ENCODE measurements at regions of chr18 and their contacts with region 1.

Region 1: GRCh38 chr18:63367053-63367953 is at the start of gene KDSR:
- DNase-seq: peak; percentile 71 to 90 (median 79)
- ATAC-seq: peak; percentile 92
- H3K4me3 ChIP-seq: peak within 1 kb of the TSS; percentile 92
- H3K4me3 Mint-ChIP-seq: peak within 1 kb of the TSS; percentile 85 to 99 (median 94)
- H3K27ac ChIP-seq: peak within 1 kb of the TSS; percentile 77
- H3K27ac Mint-ChIP-seq: peak within 1 kb of the TSS; percentile 84 to 92 (median 89)
- H3K4me1 ChIP-seq: peaks cover 6 to 29% of the 10 kb centered on the region in 2 donors
- H3K4me1 Mint-ChIP-seq: peaks cover 32 to 56% (median 41%) of the 10 kb centered on the region in 7 donors
- H3K27me3 ChIP-seq: no peaks in the 10 kb centered on the region
- H3K27me3 Mint-ChIP-seq: no peaks in the 10 kb centered on the region
- total RNA-seq, gene KDSR: 24.4 to 57.9 (median 46.9) TPM

Region 2: GRCh38 chr18:63378919-63379638 is 11.8 kb after region 1 on chr18:
- CTCF ChIA-PET with region 1: no interaction called
- POLR2A ChIA-PET with region 1: no interaction called
- intact Hi-C with region 1: loop called in 1 of 2 experiments (anchors 1 kb)
- DNase-seq: no peak
- ATAC-seq: no peak
- H3K4me3 ChIP-seq: no peak overlapping the region
- H3K4me3 Mint-ChIP-seq: peak overlapping the region in 9 of 10 donors; percentile 2 to 65 (median 19)
- H3K27ac ChIP-seq: no peak overlapping the region
- H3K27ac Mint-ChIP-seq: peak overlapping the region; percentile 5 to 85 (median 61)
- H3K4me1 ChIP-seq: peaks cover 0 to 7% of the 10 kb centered on the region in 2 donors
- H3K4me1 Mint-ChIP-seq: peaks cover 14 to 29% (median 19%) of the 10 kb centered on the region in 7 donors
- H3K27me3 ChIP-seq: no peaks in the 10 kb centered on the region
- H3K27me3 Mint-ChIP-seq: no peaks in the 10 kb centered on the region

Region 3: DNA sequence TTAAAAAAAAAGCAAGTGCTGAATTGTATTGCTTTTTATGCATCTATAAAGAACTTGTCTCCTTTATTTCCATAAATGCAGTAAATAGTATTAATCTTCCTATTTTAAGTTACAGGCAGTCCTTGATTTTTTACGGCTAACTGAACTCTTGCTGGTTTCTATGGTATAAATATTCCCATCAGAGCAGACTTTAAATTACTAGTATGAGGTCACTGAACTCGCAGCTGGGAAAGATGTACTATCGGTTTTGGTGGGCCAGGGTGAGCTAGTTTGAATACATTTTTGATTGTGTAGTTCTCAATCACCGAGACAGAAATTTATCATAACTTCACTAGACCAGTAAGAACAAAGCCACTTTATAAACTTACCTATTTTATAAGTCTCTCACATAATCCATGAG is 20.6 kb after region 1 on chr18:
- CTCF ChIA-PET with region 1: no interaction called
- POLR2A ChIA-PET with region 1: no interaction called
- intact Hi-C with region 1: loop called in 1 of 2 experiments (anchors 2 kb)
- DNase-seq: no peak
- ATAC-seq: no peak
- H3K4me3 ChIP-seq: no peak overlapping the region
- H3K4me3 Mint-ChIP-seq: no peak overlapping the region
- H3K27ac ChIP-seq: no peak overlapping the region
- H3K27ac Mint-ChIP-seq: peak overlapping the region in 1 of 9 donors; percentile 49
- H3K4me1 ChIP-seq: no peaks in the 10 kb centered on the region
- H3K4me1 Mint-ChIP-seq: peaks cover 0 to 2% (median 0%) of the 10 kb centered on the region in 7 donors
- H3K27me3 ChIP-seq: no peaks in the 10 kb centered on the region
- H3K27me3 Mint-ChIP-seq: no peaks in the 10 kb centered on the region

Region 4: DNA sequence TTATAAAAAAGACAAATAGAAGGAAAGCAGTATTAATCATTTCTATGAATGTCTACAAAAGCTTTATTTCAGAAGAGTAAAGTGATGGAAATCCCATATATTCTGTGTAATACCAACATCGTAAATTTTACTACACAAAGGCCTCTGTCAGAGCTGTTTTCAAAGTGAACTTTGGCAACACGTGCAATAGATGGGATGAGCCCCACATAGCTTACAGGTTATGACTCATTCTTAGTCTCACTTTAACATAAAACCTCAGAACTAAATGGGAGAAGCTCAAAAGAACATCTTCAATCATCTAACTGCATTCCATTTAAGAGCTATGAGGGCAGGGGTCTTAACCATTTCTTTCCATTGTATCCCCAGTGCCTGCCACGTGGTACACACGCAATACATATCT is 43.5 kb after region 1 on chr18:
- CTCF ChIA-PET with region 1: no interaction called
- POLR2A ChIA-PET with region 1: no interaction called
- intact Hi-C with region 1: loop called in 1 of 2 experiments (anchors 5 kb)
- DNase-seq: no peak
- ATAC-seq: no peak
- H3K4me3 ChIP-seq: no peak overlapping the region
- H3K4me3 Mint-ChIP-seq: peak overlapping the region in 1 of 10 donors; percentile 30
- H3K27ac ChIP-seq: no peak overlapping the region
- H3K27ac Mint-ChIP-seq: peak overlapping the region in 4 of 9 donors; percentile 5 to 68 (median 52)
- H3K4me1 ChIP-seq: peaks cover 9% of the 10 kb centered on the region in 2 donors
- H3K4me1 Mint-ChIP-seq: peaks cover 19 to 70% (median 51%) of the 10 kb centered on the region in 7 donors
- H3K27me3 ChIP-seq: no peaks in the 10 kb centered on the region
- H3K27me3 Mint-ChIP-seq: no peaks in the 10 kb centered on the region

Region 5: GRCh38 chr18:63969960-63970802 is 602.9 kb after region 1 on chr18 and contains the start of gene SERPINB8:
- CTCF ChIA-PET with region 1: no interaction called
- POLR2A ChIA-PET with region 1: no interaction called
- intact Hi-C with region 1: loop called in 1 of 2 experiments (anchors 2 kb)
- DNase-seq: peak; percentile 44 to 84 (median 77)
- ATAC-seq: peak; percentile 89
- H3K4me3 ChIP-seq: peak within 1 kb of the TSS; percentile 93
- H3K4me3 Mint-ChIP-seq: peak within 1 kb of the TSS; percentile 88 to 98 (median 94)
- H3K27ac ChIP-seq: peak within 1 kb of the TSS; percentile 96
- H3K27ac Mint-ChIP-seq: peak within 1 kb of the TSS; percentile 92 to 97 (median 94)
- H3K4me1 ChIP-seq: peaks cover 13% of the 10 kb centered on the region in 2 donors
- H3K4me1 Mint-ChIP-seq: peaks cover 26 to 42% (median 31%) of the 10 kb centered on the region in 7 donors
- H3K27me3 ChIP-seq: no peaks in the 10 kb centered on the region
- H3K27me3 Mint-ChIP-seq: peaks cover 0 to 25% (median 1%) of the 10 kb centered on the region in 5 donors
- total RNA-seq, gene SERPINB8: 9.2 to 15.7 (median 10.0) TPM